ENCODE measurements at regions of chr20 and their contacts with region 1.

Region 1: DNA sequence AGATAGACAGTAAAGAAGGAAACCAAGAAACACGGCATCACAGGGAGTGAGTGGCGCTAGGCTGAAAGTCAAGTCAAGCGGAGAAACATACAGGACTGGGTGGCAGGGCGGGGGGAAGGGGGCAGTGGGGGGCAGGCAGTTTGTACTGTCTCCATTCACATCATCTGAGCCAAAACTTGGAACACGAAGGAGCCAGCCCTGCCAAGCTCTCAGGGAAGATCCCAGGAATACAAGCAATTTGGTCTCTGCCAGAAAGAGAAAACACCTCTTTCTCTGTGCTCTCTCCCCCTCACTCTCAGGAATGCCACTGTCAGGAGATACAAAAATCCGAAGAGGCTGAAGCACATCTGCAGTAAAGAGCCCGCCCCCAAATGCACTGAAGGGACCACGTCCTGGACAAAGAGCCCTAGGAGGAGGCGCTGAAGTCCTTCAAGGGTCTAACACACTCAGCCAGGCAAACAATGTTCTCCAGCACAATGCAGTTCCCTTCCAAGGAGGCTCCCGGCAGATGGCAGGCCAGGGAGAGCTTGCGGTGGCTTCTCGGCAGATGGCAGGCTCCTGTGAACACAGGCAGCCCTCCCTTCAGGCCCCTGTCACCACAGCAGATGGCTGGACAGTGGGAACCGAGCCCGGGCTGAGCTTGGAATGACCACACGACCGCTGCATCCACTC is 90.0 kb downstream of the ATP9A start:
- DNase-seq: peak; percentile 68 to 92 (median 84)

Region 2: DNA sequence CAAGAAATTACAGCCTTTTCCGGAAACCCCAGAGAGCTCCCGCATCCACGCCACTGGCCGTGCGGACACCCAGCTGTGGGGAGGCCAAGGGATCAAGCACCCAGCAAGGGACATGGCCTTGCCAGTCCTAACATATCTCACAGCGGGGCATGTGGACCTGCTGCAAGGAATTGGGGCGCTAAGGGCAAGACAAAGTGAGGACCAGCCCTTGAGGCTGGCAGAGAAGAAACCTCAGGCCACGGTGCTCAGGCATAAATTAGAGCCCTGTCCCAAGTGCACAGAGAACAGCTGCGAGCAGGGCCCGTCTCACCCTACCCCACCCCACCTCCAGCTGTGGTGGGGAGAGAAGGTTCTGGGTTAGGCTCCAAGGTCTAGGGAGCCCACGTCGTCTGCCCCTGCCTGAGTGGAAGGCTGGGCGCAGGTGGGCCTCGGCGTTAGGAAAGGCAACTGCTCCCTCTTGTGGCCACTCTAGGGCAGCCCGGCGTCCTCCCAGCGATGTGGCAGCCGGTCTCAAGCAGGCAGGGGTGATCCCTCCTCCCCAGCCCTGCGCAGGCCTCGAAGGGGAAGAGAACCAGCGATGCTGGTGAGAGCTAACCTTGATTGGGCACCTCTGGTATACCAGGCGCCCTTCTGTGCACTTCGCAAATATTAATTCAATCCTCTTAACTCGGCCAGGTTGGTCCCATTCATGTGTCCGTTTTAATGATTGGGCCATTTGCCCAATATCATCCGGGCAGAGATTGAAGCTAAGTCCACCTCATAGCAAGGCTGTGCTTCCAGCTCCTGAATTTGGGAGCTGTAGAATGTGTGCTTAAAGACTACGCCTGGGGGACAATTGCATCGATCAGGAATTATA is 371.4 kb before region 1 on chr20:
- intact Hi-C with region 1: no loop called
- DNase-seq: peak; percentile 67 to 93 (median 84)

Region 3: GRCh38 chr20:51715163-51715860 is 37.1 kb after region 1 on chr20:
- intact Hi-C with region 1: no loop called
- DNase-seq: no peak

Region 4: DNA sequence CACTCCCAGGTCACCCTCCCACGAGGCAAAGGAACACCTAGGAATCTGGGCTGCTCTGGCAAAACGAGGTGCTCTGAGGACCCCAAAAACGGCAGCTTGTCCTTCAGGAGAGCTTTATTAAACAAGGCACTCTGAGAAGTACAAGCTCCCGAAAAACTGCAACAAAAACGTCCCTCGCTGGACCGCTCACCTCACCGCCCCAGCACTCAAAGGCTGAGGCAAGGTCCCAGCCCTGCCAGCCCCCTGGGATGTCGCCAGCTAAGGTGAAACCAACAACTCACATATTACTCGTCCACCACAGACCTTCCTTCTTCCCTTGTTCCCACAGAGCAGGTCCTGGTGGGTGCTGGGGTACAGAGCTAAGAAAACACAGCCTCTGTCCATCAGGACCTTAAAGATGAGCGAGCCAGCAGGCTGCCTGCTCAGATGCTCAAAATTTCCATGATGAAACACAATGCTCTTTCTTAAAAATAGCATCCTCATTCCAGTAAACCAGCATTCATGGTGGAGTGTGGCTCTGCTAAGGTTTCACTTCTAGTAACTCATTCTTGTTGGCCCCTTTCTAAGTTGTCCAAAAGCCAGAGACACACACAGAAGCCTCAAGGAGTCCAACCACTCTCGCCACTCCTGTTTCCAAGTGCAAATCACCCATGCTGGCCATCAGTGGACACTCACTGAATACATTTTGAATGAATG is 54.1 kb after region 1 on chr20:
- intact Hi-C with region 1: loop called (anchors 10 kb)
- DNase-seq: peak in 6 of 42 donors; percentile 23 to 66 (median 39)

Measured in head of caudate nucleus (tissue), 42 donors.